ENCODE measurements at regions of chr4 and their contacts with region 1.

Region 1: GRCh38 chr4:1249148-1249730 is 309 bp upstream of the CTBP1 start:
- DNase-seq: peak; percentile 87
- ATAC-seq: peak; percentile 70
- H3K4me3 Mint-ChIP-seq: peak overlapping the region; percentile 88
- H3K27ac Mint-ChIP-seq: peak overlapping the region; percentile 93
- H3K4me1 Mint-ChIP-seq: peaks cover 59% of the 10 kb centered on the region
- H3K27me3 Mint-ChIP-seq: no peaks in the 10 kb centered on the region
- CTCF ChIP-seq: no peak

Region 2: GRCh38 chr4:1130316-1131186 is 118.7 kb before region 1 on chr4:
- CTCF ChIA-PET with region 1: no interaction called
- POLR2A ChIA-PET with region 1: interaction called, 3 read pairs
- intact Hi-C with region 1: loop called (anchors 1 kb)
- DNase-seq: peak; percentile 63
- ATAC-seq: peak; percentile 99
- H3K4me3 Mint-ChIP-seq: no peak overlapping the region
- H3K27ac Mint-ChIP-seq: peak overlapping the region; percentile 19
- H3K4me1 Mint-ChIP-seq: peaks cover 21% of the 10 kb centered on the region
- H3K27me3 Mint-ChIP-seq: peaks cover 2% of the 10 kb centered on the region
- CTCF ChIP-seq: peak; percentile 99

Region 3: GRCh38 chr4:1200425-1201035 is 48.7 kb before region 1 on chr4:
- CTCF ChIA-PET with region 1: no interaction called
- POLR2A ChIA-PET with region 1: interaction called, 7 read pairs
- intact Hi-C with region 1: loop called (anchors 2 kb)
- DNase-seq: no peak
- ATAC-seq: peak; percentile 5
- H3K4me3 Mint-ChIP-seq: no peak overlapping the region
- H3K27ac Mint-ChIP-seq: no peak overlapping the region
- H3K4me1 Mint-ChIP-seq: peaks cover 42% of the 10 kb centered on the region
- H3K27me3 Mint-ChIP-seq: no peaks in the 10 kb centered on the region
- CTCF ChIP-seq: no peak

Region 4: GRCh38 chr4:1218634-1219565 is 30.3 kb before region 1 on chr4:
- CTCF ChIA-PET with region 1: no interaction called
- POLR2A ChIA-PET with region 1: interaction called, 21 read pairs
- intact Hi-C with region 1: loop called (anchors 1 kb)
- DNase-seq: peak; percentile 41
- ATAC-seq: peak; percentile 88
- H3K4me3 Mint-ChIP-seq: peak overlapping the region; percentile 75
- H3K27ac Mint-ChIP-seq: peak overlapping the region; percentile 81
- H3K4me1 Mint-ChIP-seq: peaks cover 64% of the 10 kb centered on the region
- H3K27me3 Mint-ChIP-seq: no peaks in the 10 kb centered on the region
- CTCF ChIP-seq: no peak

Region 5: DNA sequence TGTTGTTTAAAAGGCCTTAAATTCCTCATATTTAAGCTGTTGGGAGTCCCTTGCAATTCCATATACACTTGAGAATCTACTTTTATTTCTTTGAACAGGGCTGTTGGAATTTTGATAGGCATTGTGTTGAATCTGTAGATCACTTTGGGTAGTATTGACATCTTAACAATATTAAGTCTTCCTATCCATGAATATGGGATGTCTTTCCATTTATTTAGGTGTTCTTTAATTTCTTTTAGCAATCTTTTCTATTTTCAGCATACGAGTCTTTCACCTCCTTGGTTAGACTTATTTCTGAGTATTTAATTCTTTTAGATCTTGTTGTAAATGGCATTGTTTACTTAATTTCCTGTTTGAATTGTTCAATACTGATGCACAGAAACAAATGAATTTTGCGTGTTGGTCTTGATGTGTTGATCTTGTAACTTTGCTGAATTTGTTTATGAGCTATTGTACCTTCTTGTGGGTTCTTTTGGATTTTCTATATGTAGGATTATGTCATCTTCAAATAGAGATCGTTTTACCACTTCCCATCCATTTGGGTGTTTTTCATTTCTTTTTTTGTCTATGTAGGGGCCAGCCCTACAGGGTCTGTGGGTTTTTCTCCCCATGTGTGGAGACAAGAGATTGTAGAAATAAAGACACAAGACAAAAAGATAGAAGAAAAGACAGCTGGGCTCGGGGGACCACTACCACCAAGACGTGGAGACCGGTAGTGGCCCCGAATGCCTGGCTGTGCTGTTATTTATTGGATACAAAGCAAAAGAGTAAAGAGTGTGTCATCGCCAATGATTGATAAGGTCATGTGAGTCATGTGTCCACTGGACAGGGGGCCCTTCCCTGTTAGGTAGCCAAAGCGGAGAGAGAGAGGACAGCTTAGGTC is 17.9 kb after region 1 on chr4:
- CTCF ChIA-PET with region 1: interaction called, 23 read pairs
- POLR2A ChIA-PET with region 1: interaction called, 62 read pairs
- intact Hi-C with region 1: loop called (anchors 1 kb)
- DNase-seq: no peak
- ATAC-seq: peak; percentile 61
- H3K4me3 Mint-ChIP-seq: peak overlapping the region; percentile 84
- H3K27ac Mint-ChIP-seq: peak overlapping the region; percentile 89
- H3K4me1 Mint-ChIP-seq: peaks cover 31% of the 10 kb centered on the region
- H3K27me3 Mint-ChIP-seq: no peaks in the 10 kb centered on the region
- CTCF ChIP-seq: no peak

Region 6: GRCh38 chr4:1492651-1493537 is 243.7 kb after region 1 on chr4:
- CTCF ChIA-PET with region 1: no interaction called
- POLR2A ChIA-PET with region 1: no interaction called
- intact Hi-C with region 1: no loop called
- DNase-seq: no peak
- ATAC-seq: no peak
- H3K4me3 Mint-ChIP-seq: no peak overlapping the region
- H3K27ac Mint-ChIP-seq: no peak overlapping the region
- H3K4me1 Mint-ChIP-seq: no peaks in the 10 kb centered on the region
- H3K27me3 Mint-ChIP-seq: peaks cover 3% of the 10 kb centered on the region
- CTCF ChIP-seq: no peak